Caco-2 (cell line): ENCODE measurements at regions of chr22 and their contacts with region 1.

Region 1: DNA sequence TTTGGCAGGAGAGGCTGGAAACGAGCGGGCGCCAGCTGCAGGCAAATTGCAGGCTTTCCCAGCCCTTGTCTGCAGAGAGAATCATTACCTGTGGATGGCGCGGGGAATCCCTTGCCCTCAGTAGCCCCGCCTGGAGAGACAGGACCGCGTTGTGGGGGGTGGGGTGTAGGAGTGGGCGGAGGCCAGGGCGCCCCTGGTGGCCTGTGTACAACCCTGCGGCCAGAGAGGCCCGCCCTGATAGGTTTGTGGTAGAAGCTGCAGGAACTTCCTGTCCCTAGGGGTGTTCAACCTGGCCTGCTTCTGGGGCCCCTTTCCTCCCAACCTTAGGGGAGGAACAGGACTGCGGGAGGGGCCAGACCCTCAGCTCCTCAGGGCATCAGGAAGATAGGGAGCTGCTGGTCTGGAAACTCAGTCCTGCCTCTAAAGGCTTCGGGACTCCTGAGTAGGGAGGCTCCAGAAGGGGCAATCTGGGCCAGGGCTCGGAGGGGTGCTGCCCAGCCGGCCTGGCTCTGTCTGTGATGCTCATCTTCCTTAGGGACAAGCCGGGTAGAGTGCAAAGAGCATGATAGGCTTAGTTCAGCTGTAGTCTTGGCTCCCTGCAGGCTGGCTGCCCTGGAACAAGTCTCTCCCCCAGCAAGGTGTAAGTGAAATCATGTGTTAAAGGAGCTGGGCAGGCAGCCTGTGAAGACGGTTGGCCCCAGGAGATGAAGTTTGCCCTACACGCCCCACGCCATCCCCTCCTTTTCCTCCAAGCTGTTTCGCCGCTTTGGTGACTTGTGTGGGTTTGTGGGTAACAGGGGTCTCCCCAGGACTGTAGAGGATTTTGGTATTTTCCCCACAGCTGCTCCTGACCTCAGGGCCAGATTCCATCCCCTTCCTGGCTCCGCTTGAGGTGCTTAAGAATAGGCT is 24.1 kb upstream of the SUSD2 start:
- DNase-seq: peak; percentile 74 to 81
- H3K4me3 ChIP-seq: no peak overlapping the region
- H3K4me3 Mint-ChIP-seq: peak overlapping the region; percentile 63
- H3K27ac Mint-ChIP-seq: no peak overlapping the region
- H3K4me1 ChIP-seq: no peaks in the 10 kb centered on the region
- H3K4me1 Mint-ChIP-seq: no peaks in the 10 kb centered on the region
- H3K27me3 ChIP-seq: no peaks in the 10 kb centered on the region
- H3K27me3 Mint-ChIP-seq: no peaks in the 10 kb centered on the region
- CTCF ChIP-seq: peak; percentile 64 to 78

Region 2: GRCh38 chr22:23613193-23613972 is 543.8 kb before region 1 on chr22:
- CTCF ChIA-PET with region 1: no interaction called
- POLR2A ChIA-PET with region 1: no interaction called
- intact Hi-C with region 1: no loop called
- DNase-seq: no peak
- H3K4me3 ChIP-seq: no peak overlapping the region
- H3K4me3 Mint-ChIP-seq: no peak overlapping the region
- H3K27ac Mint-ChIP-seq: no peak overlapping the region
- H3K4me1 ChIP-seq: 0 out of 2 replicates have a peak, but pooled peaks cover 6% of the 10 kb centered on the region
- H3K4me1 Mint-ChIP-seq: no peaks in the 10 kb centered on the region
- H3K27me3 ChIP-seq: no peaks in the 10 kb centered on the region
- H3K27me3 Mint-ChIP-seq: no peaks in the 10 kb centered on the region
- CTCF ChIP-seq: no peak

Region 3: GRCh38 chr22:23984430-23984829 is 172.7 kb before region 1 on chr22:
- CTCF ChIA-PET with region 1: no interaction called
- POLR2A ChIA-PET with region 1: no interaction called
- intact Hi-C with region 1: loop called (anchors 5 kb)
- DNase-seq: peak; percentile 53 to 67
- H3K4me3 ChIP-seq: no peak overlapping the region
- H3K4me3 Mint-ChIP-seq: no peak overlapping the region
- H3K27ac Mint-ChIP-seq: no peak overlapping the region
- H3K4me1 ChIP-seq: no peaks in the 10 kb centered on the region
- H3K4me1 Mint-ChIP-seq: no peaks in the 10 kb centered on the region
- H3K27me3 ChIP-seq: no peaks in the 10 kb centered on the region
- H3K27me3 Mint-ChIP-seq: no peaks in the 10 kb centered on the region
- CTCF ChIP-seq: peak; percentile 65 to 80

Region 4: DNA sequence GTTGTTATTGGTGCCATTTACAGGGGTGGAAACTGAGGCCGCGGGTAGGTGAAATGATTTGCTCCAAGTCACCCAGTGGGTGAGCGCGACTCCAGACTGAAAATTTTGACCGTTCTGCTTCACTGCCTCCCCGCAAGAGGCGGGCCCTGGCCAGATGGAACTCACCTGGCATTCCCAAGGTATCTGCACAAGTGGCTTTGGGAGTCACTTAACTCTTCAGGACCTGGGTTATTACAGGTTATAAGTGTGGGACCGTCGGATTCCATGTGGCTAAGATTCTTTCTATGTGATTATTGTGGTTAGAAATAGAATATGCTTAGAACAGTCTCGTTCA is 145.5 kb before region 1 on chr22:
- CTCF ChIA-PET with region 1: interaction called, 11 read pairs
- POLR2A ChIA-PET with region 1: no interaction called
- intact Hi-C with region 1: no loop called
- DNase-seq: peak in 1 of 2 experiments; percentile 49
- H3K4me3 ChIP-seq: peak overlapping the region; percentile 93
- H3K4me3 Mint-ChIP-seq: peak overlapping the region; percentile 92
- H3K27ac Mint-ChIP-seq: peak overlapping the region; percentile 93
- H3K4me1 ChIP-seq: peaks cover 26% of the 10 kb centered on the region
- H3K4me1 Mint-ChIP-seq: peaks cover 33% of the 10 kb centered on the region
- H3K27me3 ChIP-seq: no peaks in the 10 kb centered on the region
- H3K27me3 Mint-ChIP-seq: no peaks in the 10 kb centered on the region
- CTCF ChIP-seq: no peak

Region 5: DNA sequence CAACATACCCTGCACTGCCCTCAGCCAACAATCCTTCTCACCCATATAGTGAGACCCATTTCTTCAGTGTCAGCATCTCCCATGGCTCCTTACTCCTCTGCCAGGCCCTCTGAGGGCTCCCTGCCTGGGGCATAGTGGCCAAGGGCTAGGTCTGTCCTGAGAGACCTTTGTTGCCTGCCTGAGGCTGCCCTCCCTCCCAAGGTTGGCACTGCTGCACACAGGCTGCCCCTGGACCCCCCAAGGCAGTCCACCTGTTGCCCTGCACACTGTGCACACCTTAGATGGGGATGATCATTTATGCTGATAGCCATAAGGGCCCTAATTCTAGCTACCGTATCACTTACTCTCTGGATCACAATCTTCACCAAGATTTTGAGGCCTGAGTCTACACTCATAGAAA is 32.9 kb before region 1 on chr22:
- CTCF ChIA-PET with region 1: no interaction called
- POLR2A ChIA-PET with region 1: no interaction called
- intact Hi-C with region 1: no loop called
- DNase-seq: no peak
- H3K4me3 ChIP-seq: no peak overlapping the region
- H3K4me3 Mint-ChIP-seq: no peak overlapping the region
- H3K27ac Mint-ChIP-seq: no peak overlapping the region
- H3K4me1 ChIP-seq: no peaks in the 10 kb centered on the region
- H3K4me1 Mint-ChIP-seq: no peaks in the 10 kb centered on the region
- H3K27me3 ChIP-seq: no peaks in the 10 kb centered on the region
- H3K27me3 Mint-ChIP-seq: no peaks in the 10 kb centered on the region
- CTCF ChIP-seq: no peak

Region 6: GRCh38 chr22:24146194-24146616 is 11.0 kb before region 1 on chr22:
- CTCF ChIA-PET with region 1: interaction called, 20 read pairs
- POLR2A ChIA-PET with region 1: no interaction called
- intact Hi-C with region 1: no loop called
- DNase-seq: peak; percentile 77 to 80
- H3K4me3 ChIP-seq: no peak overlapping the region
- H3K4me3 Mint-ChIP-seq: peak overlapping the region; percentile 49
- H3K27ac Mint-ChIP-seq: peak overlapping the region; percentile 75
- H3K4me1 ChIP-seq: peaks cover 38% of the 10 kb centered on the region
- H3K4me1 Mint-ChIP-seq: peaks cover 33% of the 10 kb centered on the region
- H3K27me3 ChIP-seq: no peaks in the 10 kb centered on the region
- H3K27me3 Mint-ChIP-seq: no peaks in the 10 kb centered on the region
- CTCF ChIP-seq: no peak